Adrenal gland (tissue), 19 donors: ENCODE measurements at regions of chr10 and their contacts with region 1.

Region 1: DNA sequence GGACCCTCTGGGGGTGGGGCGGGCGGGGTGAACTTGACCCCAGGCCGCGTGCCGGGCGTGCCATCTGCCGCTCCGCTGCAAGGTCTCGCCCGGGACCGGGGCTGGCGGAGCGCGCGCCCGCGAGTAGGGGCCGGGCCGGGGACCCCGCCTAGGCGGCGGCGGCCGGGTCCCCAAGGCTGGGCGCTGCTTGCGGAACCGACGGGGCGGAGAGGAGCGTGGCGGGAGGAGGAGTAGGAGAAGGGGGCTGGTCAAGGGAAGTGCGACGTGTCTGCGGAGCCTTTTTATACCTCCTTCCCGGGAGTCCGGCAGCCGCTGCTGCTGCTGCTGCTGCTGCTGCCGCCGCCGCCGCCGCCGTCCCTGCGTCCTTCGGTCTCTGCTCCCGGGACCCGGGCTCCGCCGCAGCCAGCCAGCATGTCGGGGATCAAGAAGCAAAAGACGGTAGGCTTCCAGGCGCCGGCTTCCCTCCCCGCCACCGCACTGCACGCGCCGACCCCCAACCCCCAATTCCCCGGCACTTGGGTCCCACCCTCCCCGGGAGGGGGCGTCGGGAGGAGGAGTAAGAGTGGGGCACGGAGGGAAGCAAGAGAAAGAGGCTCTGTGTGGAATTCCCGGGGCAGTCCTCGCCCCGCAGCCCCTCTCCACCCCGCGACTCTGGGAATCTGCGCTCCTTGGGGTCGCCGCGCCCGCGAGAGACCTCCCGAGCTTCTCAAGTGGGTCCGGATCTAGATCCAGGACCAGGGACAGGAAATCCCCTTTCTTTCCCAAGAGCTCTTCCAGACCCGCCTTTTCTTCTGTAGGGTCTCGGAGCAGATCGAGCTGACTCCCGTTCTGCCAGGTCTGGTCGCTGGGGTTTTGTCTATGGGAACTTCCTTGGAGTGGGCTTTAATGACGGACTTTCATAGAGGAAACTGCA is at the start of gene PAPSS2:
- DNase-seq: peak; percentile 73 to 83 (median 80)
- H3K4me3 ChIP-seq: peak within 1 kb of the TSS; percentile 28 to 84 (median 67)
- H3K27ac ChIP-seq: peak within 1 kb of the TSS; percentile 51 to 94 (median 88)
- H3K4me1 ChIP-seq: peaks cover 13 to 51% of the 10 kb centered on the region in 2 donors
- H3K27me3 ChIP-seq: no peaks in the 10 kb centered on the region
- CTCF ChIP-seq: peak in 3 of 6 experiments; percentile 4 to 16 (median 8)
- POLR2A ChIP-seq: peak; percentile 77 to 86
- total RNA-seq, gene PAPSS2: 182 to 775 (median 252) TPM

Region 2: DNA sequence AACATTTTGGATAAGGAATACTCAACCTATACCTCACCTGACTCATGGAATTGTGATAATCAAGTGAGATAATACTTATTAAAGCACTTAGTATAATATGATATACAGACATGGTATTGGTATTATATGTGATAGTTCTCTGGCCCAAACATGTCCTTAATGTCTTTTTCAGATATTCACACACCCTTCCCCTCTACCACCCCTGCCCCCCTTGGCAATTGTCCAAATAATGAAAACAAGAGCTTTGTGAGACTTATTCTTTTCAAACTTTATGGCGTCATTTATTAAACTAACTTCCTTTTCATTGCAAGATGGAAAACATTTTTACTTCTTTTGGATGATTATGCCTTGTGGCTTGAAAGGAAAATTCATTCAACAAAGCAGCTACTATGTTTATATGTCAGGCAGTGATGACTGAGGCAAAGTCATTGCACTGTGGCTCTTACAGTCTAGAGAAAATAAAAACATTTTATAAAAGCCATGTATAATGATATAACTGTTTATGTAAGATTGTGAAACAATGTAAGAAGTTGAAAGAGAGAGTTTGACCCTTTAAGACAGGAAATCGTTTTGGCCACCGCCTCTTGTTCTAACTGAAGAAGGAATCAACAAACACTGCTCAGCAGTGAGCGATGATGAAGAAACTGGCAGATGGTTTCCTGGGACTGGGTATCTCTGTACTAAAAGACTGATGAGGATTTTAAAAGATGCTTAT is 127.8 kb before region 1 on chr10:
- intact Hi-C with region 1: loop called in 1 of 2 experiments (anchors 10 kb)
- DNase-seq: peak in 1 of 7 donors; percentile 36
- H3K4me3 ChIP-seq: no peak overlapping the region
- H3K27ac ChIP-seq: peak overlapping the region in 4 of 5 donors; percentile 20 to 61 (median 54)
- H3K4me1 ChIP-seq: peaks cover 0 to 25% of the 10 kb centered on the region in 2 donors
- H3K27me3 ChIP-seq: no peaks in the 10 kb centered on the region
- CTCF ChIP-seq: no peak
- POLR2A ChIP-seq: no peak

Region 3: DNA sequence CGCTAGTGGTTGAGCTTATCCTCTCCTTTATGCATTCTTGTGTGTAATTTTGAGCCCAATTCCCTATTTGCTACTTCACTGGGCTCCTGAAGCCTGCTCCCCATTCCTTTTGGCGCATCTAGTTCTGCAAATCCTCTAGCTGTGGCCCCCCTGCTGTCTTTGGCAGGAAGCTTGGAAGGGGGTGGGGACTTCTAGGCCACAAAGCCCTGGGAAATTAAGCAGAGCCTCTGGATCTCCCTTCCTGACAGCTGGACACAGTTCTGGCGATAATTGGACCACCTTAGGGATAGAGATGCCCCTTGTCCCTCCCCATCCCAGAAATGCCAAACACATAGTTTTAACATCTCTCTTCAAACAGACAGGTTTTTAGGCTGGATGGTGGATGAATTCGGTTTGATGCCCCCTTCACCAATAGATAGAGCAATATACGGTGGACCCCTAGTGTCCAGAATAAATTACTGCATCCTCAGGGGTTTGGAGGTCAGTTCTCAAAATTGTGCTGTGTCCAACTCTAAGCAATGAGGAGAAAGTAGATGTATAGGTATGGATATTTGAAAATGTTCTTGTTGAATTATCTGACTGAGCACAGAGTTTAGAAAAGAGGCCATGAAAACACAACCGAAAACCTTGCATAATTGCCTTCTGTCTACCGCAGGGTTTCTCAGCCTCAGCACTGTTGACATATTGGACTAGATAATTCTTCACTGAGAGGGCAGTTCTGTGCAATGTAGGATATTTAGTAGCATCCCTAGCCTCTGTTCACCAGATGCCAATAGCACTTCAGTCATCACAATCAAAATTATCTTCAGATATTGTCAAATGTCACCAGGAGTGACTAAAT is 75.4 kb after region 1 on chr10:
- intact Hi-C with region 1: loop called (anchors 5 kb)
- DNase-seq: peak in 3 of 7 donors; percentile 26 to 35 (median 28)
- H3K4me3 ChIP-seq: no peak overlapping the region
- H3K27ac ChIP-seq: peak overlapping the region in 1 of 5 donors; percentile 72
- H3K4me1 ChIP-seq: peaks cover 0 to 24% of the 10 kb centered on the region in 2 donors
- H3K27me3 ChIP-seq: no peaks in the 10 kb centered on the region
- CTCF ChIP-seq: peak; percentile 67 to 85 (median 80)
- POLR2A ChIP-seq: no peak